SK-N-SH (cell line): ENCODE measurements at regions of chr22 and their contacts with region 1.

Region 1: GRCh38 chr22:20885557-20886323 is 26.9 kb downstream of the SNAP29 start:
- DNase-seq: peak; percentile 84
- H3K4me3 ChIP-seq: peak overlapping the region in 1 of 2 experiments; percentile 27; a peak in 2 of 4 replicates
- H3K27ac ChIP-seq: peak overlapping the region; percentile 59 to 95
- H3K4me1 ChIP-seq: peaks cover 0 to 33% of the 10 kb centered on the region in 2 experiments; a peak in 1 of 4 replicates
- H3K27me3 ChIP-seq: no peaks in the 10 kb centered on the region
- CTCF ChIP-seq: peak; percentile 91
- EP300 ChIP-seq: peak in 1 of 2 experiments; percentile 68; a peak in 1 of 4 replicates
- RAD21 ChIP-seq: peak; percentile 88

Region 2: GRCh38 chr22:20852076-20852475 is 33.7 kb before region 1 on chr22:
- CTCF ChIA-PET with region 1: no interaction called
- POLR2A ChIA-PET with region 1: no interaction called
- DNase-seq: no peak
- H3K4me3 ChIP-seq: no peak overlapping the region
- H3K27ac ChIP-seq: no peak overlapping the region
- H3K4me1 ChIP-seq: peaks cover 5 to 7% of the 10 kb centered on the region in 2 experiments; a peak in 2 of 4 replicates
- H3K27me3 ChIP-seq: no peaks in the 10 kb centered on the region
- CTCF ChIP-seq: no peak
- EP300 ChIP-seq: no peak
- RAD21 ChIP-seq: peak; percentile 38

Region 3: GRCh38 chr22:20867179-20868024 is 18.3 kb before region 1 on chr22:
- CTCF ChIA-PET with region 1: interaction called, 19 read pairs
- POLR2A ChIA-PET with region 1: interaction called, 15 read pairs
- DNase-seq: peak; percentile 77
- H3K4me3 ChIP-seq: no peak overlapping the region
- H3K27ac ChIP-seq: peak overlapping the region in 1 of 2 experiments; percentile 94; a peak in 2 of 4 replicates
- H3K4me1 ChIP-seq: peaks cover 0 to 37% of the 10 kb centered on the region in 2 experiments; a peak in 2 of 4 replicates
- H3K27me3 ChIP-seq: no peaks in the 10 kb centered on the region
- CTCF ChIP-seq: no peak
- EP300 ChIP-seq: peak in 1 of 2 experiments; percentile 73; a peak in 1 of 4 replicates
- RAD21 ChIP-seq: no peak

Region 4: DNA sequence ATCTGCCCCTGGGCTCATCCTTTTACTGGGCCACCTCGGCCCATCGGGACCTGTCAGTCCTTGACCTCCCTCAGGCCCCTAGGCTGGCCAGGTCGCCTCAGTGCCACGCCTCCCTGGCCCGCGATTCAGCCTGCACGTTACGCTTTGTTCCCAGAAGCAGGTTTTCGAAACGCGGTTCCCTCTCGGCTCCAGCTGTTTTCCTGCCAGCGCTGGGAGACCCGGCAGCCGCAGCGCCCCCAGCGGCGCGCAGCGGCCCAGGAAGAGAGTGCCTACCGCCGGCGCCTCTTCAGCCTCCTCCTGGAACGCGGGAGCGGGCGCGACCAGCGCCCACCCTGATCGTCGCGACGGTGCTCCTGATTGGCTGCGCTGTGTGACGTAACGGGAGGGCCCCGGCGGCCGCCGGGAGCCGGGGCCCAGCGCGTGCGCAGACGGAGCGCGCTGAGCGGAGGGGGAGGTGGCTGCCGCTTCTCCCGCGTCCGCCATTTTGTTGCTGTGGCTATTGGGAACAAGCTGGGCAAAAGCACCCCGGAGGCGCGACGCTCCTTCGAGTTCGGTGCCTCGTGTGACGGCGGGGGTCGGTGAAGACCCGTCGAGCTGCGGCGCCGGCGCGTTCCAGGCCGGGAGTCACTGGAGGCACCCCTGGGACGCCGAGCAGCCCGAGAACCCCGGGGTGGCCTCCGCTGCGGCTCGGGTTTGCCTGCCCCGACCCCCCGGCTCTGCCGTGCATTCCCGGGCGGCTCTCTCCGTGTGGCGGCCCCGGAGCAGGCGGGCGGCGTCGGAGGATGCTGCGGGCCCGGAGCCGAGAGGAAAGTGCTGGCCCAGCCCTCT is 31.5 kb after region 1 on chr22 and contains the start of gene CRKL:
- CTCF ChIA-PET with region 1: interaction called, 20 read pairs
- POLR2A ChIA-PET with region 1: interaction called, 11 read pairs
- DNase-seq: peak; percentile 100
- H3K4me3 ChIP-seq: peak within 1 kb of the TSS; percentile 86 to 98
- H3K27ac ChIP-seq: peak within 1 kb of the TSS; percentile 86 to 93
- H3K4me1 ChIP-seq: peaks cover 7 to 10% of the 10 kb centered on the region in 2 experiments; a peak in 3 of 4 replicates
- H3K27me3 ChIP-seq: no peaks in the 10 kb centered on the region
- CTCF ChIP-seq: peak; percentile 93
- EP300 ChIP-seq: no peak
- RAD21 ChIP-seq: peak; percentile 59
- polyA plus RNA-seq, gene CRKL: 9.6 and 10.2 TPM in 2 replicates

Region 5: DNA sequence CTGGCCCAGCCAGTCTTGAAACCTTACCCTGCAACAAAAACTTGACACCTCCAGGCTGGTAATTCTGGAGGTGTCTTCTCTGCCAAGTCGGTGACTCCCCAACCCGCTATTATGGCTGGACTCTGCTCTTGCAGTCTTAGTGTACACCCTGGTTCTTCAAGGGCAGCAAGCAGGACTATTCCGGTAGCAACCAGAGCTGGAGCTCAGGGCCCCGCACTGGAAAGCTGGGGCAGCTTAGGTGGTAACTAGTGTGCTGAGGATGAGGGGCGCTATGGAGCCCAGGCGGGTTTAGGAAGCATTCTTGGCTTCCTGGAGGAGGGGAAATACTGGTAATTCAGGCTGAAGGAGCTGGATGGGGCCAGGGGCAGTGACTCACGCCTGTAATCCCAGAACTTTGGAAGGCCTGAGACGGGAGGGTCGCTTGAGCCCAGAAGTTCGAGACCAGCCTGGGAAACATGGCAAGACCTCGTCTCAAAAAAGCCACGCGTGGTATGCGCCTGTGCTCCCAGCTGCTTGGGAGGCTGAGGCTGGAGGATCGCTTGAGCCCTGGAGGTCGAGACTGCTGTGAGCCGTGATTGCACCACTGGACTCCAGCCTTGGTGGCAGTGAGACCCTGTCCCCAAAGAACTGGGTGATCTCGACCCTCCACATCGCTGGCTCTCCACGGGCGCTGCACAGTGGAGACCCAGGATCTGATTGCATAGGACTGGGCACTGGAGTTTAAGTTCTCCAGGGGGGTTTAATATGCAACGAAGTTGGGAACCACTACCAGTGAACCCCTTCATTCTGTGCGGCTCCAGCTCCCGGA is 70.7 kb after region 1 on chr22:
- CTCF ChIA-PET with region 1: interaction called, 15 read pairs
- POLR2A ChIA-PET with region 1: no interaction called
- DNase-seq: no peak
- H3K4me3 ChIP-seq: no peak overlapping the region
- H3K27ac ChIP-seq: no peak overlapping the region
- H3K4me1 ChIP-seq: no peaks in the 10 kb centered on the region; a peak in 1 of 4 replicates
- H3K27me3 ChIP-seq: no peaks in the 10 kb centered on the region
- CTCF ChIP-seq: no peak
- EP300 ChIP-seq: no peak
- RAD21 ChIP-seq: no peak

Region 6: GRCh38 chr22:20981787-20982562 is 96.2 kb after region 1 on chr22 and contains the start of gene LZTR1:
- CTCF ChIA-PET with region 1: interaction called, 12 read pairs
- POLR2A ChIA-PET with region 1: interaction called, 11 read pairs
- DNase-seq: peak; percentile 94
- H3K4me3 ChIP-seq: peak within 1 kb of the TSS; percentile 71 to 97
- H3K27ac ChIP-seq: peak within 1 kb of the TSS; percentile 77 to 98
- H3K4me1 ChIP-seq: peaks cover 6 to 24% of the 10 kb centered on the region in 2 experiments; a peak in 2 of 4 replicates
- H3K27me3 ChIP-seq: no peaks in the 10 kb centered on the region
- CTCF ChIP-seq: peak; percentile 62
- EP300 ChIP-seq: no peak; a peak in 1 of 4 replicates
- RAD21 ChIP-seq: peak; percentile 54
- polyA plus RNA-seq, gene LZTR1: 37.7 and 41.5 TPM in 2 replicates